HCT116 (cell line): ENCODE measurements at regions of chr10 and their contacts with region 1.

Region 1: GRCh38 chr10:62264702-62265436 is 3.8 kb downstream of the RTKN2 start:
- DNase-seq: peak; percentile 87
- ATAC-seq: peak; percentile 63
- H3K4me3 ChIP-seq: no peak overlapping the region
- H3K27ac ChIP-seq: no peak overlapping the region
- H3K4me1 ChIP-seq: peaks cover 3 to 20% of the 10 kb centered on the region in 2 experiments; a peak in 3 of 4 replicates
- H3K27me3 ChIP-seq: no peaks in the 10 kb centered on the region
- CTCF ChIP-seq: peak; percentile 61 to 64 (median 64); a peak in 4 of 6 replicates
- POLR2A ChIP-seq: no peak
- RAD21 ChIP-seq: peak; percentile 68

Region 2: DNA sequence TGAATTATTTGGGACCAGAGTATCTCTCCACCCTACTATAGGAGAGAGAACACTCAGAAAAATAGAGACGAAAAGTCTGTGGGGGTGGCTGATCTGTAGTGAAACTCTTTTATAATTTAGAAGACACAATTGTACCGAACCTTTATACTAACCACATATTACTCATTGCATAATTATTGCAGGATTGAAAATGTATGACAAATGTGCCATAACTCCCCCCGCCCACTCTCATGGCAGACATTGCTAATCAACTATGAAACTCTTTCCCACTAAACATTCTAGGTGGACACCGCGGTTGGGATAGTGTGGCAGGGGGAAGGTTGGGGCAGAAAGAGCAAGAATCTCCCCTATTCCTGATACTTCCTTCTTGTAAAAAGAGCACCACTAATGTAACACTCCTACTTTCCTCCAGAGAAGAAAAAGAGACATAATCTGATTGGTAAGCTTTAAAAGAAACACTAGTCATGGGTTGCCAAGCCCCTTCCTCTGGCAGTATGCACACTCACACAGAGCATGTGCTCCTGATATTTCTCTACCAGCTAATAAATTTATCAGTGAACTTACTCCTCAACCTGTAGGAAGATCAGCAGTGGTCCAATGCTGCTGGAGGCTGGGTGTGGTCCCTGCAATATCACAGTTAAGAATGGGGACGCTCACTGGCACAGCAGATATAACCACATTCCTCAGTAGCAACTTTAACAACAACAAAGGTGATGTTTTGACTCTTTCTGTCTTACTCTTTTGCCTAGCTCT is 382.1 kb before region 1 on chr10:
- CTCF ChIA-PET with region 1: no interaction called
- POLR2A ChIA-PET with region 1: no interaction called
- RAD21 ChIA-PET with region 1: no interaction called
- intact Hi-C with region 1: no loop called
- DNase-seq: no peak
- ATAC-seq: no peak
- H3K4me3 ChIP-seq: no peak overlapping the region
- H3K27ac ChIP-seq: no peak overlapping the region
- H3K4me1 ChIP-seq: peaks cover 0 to 9% of the 10 kb centered on the region in 2 experiments; a peak in 2 of 4 replicates
- H3K27me3 ChIP-seq: no peaks in the 10 kb centered on the region
- CTCF ChIP-seq: no peak
- POLR2A ChIP-seq: no peak
- RAD21 ChIP-seq: no peak

Region 3: GRCh38 chr10:62025901-62026879 is 238.7 kb before region 1 on chr10:
- CTCF ChIA-PET with region 1: no interaction called
- POLR2A ChIA-PET with region 1: no interaction called
- RAD21 ChIA-PET with region 1: no interaction called
- intact Hi-C with region 1: no loop called
- DNase-seq: no peak
- ATAC-seq: no peak
- H3K4me3 ChIP-seq: no peak overlapping the region
- H3K27ac ChIP-seq: no peak overlapping the region
- H3K4me1 ChIP-seq: peaks cover 0 to 10% of the 10 kb centered on the region in 2 experiments; a peak in 1 of 4 replicates
- H3K27me3 ChIP-seq: no peaks in the 10 kb centered on the region
- CTCF ChIP-seq: no peak
- POLR2A ChIP-seq: no peak
- RAD21 ChIP-seq: no peak

Region 4: GRCh38 chr10:62231371-62231770 is 33.5 kb before region 1 on chr10:
- CTCF ChIA-PET with region 1: no interaction called
- POLR2A ChIA-PET with region 1: no interaction called
- RAD21 ChIA-PET with region 1: no interaction called
- intact Hi-C with region 1: no loop called
- DNase-seq: no peak
- ATAC-seq: no peak
- H3K4me3 ChIP-seq: no peak overlapping the region
- H3K27ac ChIP-seq: no peak overlapping the region
- H3K4me1 ChIP-seq: no peaks in the 10 kb centered on the region
- H3K27me3 ChIP-seq: no peaks in the 10 kb centered on the region
- CTCF ChIP-seq: no peak
- POLR2A ChIP-seq: no peak
- RAD21 ChIP-seq: no peak

Region 5: DNA sequence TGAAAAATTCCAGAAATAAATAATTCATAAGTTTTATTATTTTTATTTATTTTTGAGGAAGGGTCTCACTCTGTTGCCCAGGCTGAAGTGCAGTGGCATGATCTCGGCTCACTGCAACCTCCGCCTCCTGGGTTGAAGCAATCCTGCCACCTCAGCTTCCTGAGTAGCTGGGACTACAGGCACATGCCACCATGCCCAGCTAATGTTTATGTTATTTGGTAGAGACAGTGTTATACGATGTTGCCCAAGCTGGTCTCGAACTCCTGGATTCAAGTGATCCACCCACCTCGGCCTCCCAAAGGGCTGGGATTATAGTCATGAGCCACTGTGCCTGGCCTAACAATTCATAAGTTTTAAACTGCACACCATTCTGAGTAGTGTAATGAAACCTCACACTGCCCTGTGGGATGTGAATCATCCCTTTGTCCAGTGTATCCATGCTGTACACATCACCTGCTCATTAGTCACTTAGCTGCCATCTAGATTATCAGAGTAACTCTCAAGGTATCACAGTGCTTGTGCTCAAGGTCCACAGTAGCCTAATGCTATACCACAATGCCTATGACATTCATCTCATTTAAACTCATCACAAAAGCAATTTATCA is 14.2 kb before region 1 on chr10:
- CTCF ChIA-PET with region 1: interaction called, 10 read pairs
- POLR2A ChIA-PET with region 1: no interaction called
- RAD21 ChIA-PET with region 1: no interaction called
- intact Hi-C with region 1: no loop called
- DNase-seq: peak; percentile 72
- ATAC-seq: peak; percentile 98
- H3K4me3 ChIP-seq: no peak overlapping the region
- H3K27ac ChIP-seq: no peak overlapping the region
- H3K4me1 ChIP-seq: peaks cover 0 to 18% of the 10 kb centered on the region in 2 experiments; a peak in 2 of 4 replicates
- H3K27me3 ChIP-seq: no peaks in the 10 kb centered on the region
- CTCF ChIP-seq: no peak
- POLR2A ChIP-seq: no peak
- RAD21 ChIP-seq: no peak

Region 6: GRCh38 chr10:62306663-62307062 is 41.8 kb after region 1 on chr10:
- CTCF ChIA-PET with region 1: no interaction called
- POLR2A ChIA-PET with region 1: no interaction called
- RAD21 ChIA-PET with region 1: no interaction called
- intact Hi-C with region 1: no loop called
- DNase-seq: no peak
- ATAC-seq: no peak
- H3K4me3 ChIP-seq: no peak overlapping the region
- H3K27ac ChIP-seq: no peak overlapping the region
- H3K4me1 ChIP-seq: no peaks in the 10 kb centered on the region; a peak in 1 of 4 replicates
- H3K27me3 ChIP-seq: no peaks in the 10 kb centered on the region
- CTCF ChIP-seq: no peak
- POLR2A ChIP-seq: no peak
- RAD21 ChIP-seq: no peak

Region 7: GRCh38 chr10:62414359-62414758 is 149.5 kb after region 1 on chr10:
- CTCF ChIA-PET with region 1: interaction called, 11 read pairs
- POLR2A ChIA-PET with region 1: no interaction called
- RAD21 ChIA-PET with region 1: interaction called in 1 of 2 experiments, 3 read pairs
- intact Hi-C with region 1: no loop called
- DNase-seq: no peak
- ATAC-seq: peak; percentile 75
- H3K4me3 ChIP-seq: no peak overlapping the region
- H3K27ac ChIP-seq: no peak overlapping the region
- H3K4me1 ChIP-seq: no peaks in the 10 kb centered on the region
- H3K27me3 ChIP-seq: 0 out of 2 replicates have a peak, but pooled peaks cover 4% of the 10 kb centered on the region
- CTCF ChIP-seq: peak in 2 of 3 experiments; percentile 32 to 38; a peak in 2 of 6 replicates
- POLR2A ChIP-seq: no peak
- RAD21 ChIP-seq: peak; percentile 46

Region 8: GRCh38 chr10:62422068-62422590 is 157.3 kb after region 1 on chr10:
- CTCF ChIA-PET with region 1: interaction called, 4 read pairs
- POLR2A ChIA-PET with region 1: no interaction called
- RAD21 ChIA-PET with region 1: interaction called in 1 of 2 experiments, 3 read pairs
- intact Hi-C with region 1: loop called (anchors 2 kb)
- DNase-seq: no peak
- ATAC-seq: no peak
- H3K4me3 ChIP-seq: no peak overlapping the region
- H3K27ac ChIP-seq: no peak overlapping the region
- H3K4me1 ChIP-seq: peaks cover 4 to 31% of the 10 kb centered on the region in 2 experiments; a peak in 3 of 4 replicates
- H3K27me3 ChIP-seq: no peaks in the 10 kb centered on the region
- CTCF ChIP-seq: no peak
- POLR2A ChIP-seq: no peak
- RAD21 ChIP-seq: no peak